ENCODE measurements at regions of chr7 and their contacts with region 1.

Region 1: DNA sequence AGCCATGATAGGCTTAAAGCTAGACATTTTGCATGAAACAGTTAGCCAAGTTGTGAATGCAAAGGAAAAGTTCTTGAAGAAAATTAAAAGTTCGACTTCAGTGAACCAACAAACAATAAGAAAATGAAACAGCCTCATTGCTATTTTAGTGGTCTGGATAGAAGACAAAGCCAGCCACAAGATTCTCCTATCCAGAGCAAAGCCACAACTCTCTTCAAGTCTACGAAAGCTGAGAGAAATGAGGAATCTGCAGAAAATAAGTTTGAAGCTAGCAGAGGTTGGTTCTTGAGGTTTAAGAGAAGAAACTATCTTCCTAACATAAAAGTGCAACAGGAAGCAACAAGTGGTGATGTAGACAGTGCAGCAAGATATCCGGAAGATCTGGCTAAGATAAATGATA is 271.4 kb upstream of the GRM3 start:
- DNase-seq: no peak
- ATAC-seq: no peak
- H3K4me3 ChIP-seq: no peak overlapping the region
- H3K27ac ChIP-seq: no peak overlapping the region
- H3K4me1 ChIP-seq: no peaks in the 10 kb centered on the region
- H3K27me3 ChIP-seq: no peaks in the 10 kb centered on the region
- CTCF ChIP-seq: no peak
- POLR2A ChIP-seq: no peak
- RAD21 ChIP-seq: no peak

Region 2: DNA sequence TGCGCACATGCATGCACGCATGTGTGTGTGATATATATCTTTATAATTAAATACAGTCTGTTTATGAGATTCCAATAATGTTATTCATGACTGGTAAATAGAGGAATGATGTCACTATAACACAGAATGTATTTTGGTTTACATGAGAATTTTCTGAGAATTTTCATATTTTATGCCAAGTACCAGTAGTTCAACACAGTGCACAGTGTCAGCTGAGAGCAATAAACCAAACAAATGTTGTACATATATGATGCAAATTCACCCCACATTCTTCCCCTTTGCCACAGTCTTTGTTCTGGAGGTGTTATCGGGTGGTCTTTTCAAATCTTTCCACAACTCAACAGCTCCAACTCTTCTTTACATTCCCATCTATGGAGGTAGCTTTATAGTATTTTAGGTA is 190.8 kb before region 1 on chr7:
- CTCF ChIA-PET with region 1: no interaction called
- POLR2A ChIA-PET with region 1: no interaction called
- RAD21 ChIA-PET with region 1: no interaction called
- intact Hi-C with region 1: no loop called
- DNase-seq: no peak
- ATAC-seq: no peak
- H3K4me3 ChIP-seq: no peak overlapping the region
- H3K27ac ChIP-seq: no peak overlapping the region
- H3K4me1 ChIP-seq: no peaks in the 10 kb centered on the region
- H3K27me3 ChIP-seq: no peaks in the 10 kb centered on the region
- CTCF ChIP-seq: no peak
- POLR2A ChIP-seq: no peak
- RAD21 ChIP-seq: no peak

Region 3: GRCh38 chr7:86209036-86209435 is 163.2 kb before region 1 on chr7:
- CTCF ChIA-PET with region 1: no interaction called
- POLR2A ChIA-PET with region 1: no interaction called
- RAD21 ChIA-PET with region 1: no interaction called
- intact Hi-C with region 1: no loop called
- DNase-seq: no peak
- ATAC-seq: no peak
- H3K4me3 ChIP-seq: no peak overlapping the region
- H3K27ac ChIP-seq: no peak overlapping the region
- H3K4me1 ChIP-seq: no peaks in the 10 kb centered on the region
- H3K27me3 ChIP-seq: no peaks in the 10 kb centered on the region
- CTCF ChIP-seq: no peak
- POLR2A ChIP-seq: no peak
- RAD21 ChIP-seq: no peak

Region 4: DNA sequence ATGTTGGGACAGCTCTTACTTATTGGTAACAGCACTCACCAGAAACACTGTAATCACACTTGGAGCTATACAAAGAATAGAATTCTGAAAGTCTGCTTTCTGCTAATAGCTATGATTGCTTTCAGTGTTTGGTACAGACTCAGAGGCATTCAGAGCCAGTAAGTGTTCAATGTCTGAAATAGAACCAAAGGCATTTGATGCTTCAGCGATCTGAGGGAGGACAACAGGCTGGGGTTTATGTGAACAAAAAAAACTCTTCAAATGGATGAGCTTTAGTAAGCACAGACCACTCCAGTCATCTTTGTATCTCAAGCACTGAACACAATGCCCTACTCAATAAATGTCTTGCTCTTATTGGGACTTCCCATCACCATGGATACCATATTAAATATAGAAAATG is 51.4 kb before region 1 on chr7:
- CTCF ChIA-PET with region 1: no interaction called
- POLR2A ChIA-PET with region 1: no interaction called
- RAD21 ChIA-PET with region 1: no interaction called
- intact Hi-C with region 1: loop called (anchors 10 kb)
- DNase-seq: no peak
- ATAC-seq: no peak
- H3K4me3 ChIP-seq: no peak overlapping the region
- H3K27ac ChIP-seq: no peak overlapping the region
- H3K4me1 ChIP-seq: no peaks in the 10 kb centered on the region
- H3K27me3 ChIP-seq: no peaks in the 10 kb centered on the region
- CTCF ChIP-seq: no peak
- POLR2A ChIP-seq: no peak
- RAD21 ChIP-seq: no peak

Region 5: DNA sequence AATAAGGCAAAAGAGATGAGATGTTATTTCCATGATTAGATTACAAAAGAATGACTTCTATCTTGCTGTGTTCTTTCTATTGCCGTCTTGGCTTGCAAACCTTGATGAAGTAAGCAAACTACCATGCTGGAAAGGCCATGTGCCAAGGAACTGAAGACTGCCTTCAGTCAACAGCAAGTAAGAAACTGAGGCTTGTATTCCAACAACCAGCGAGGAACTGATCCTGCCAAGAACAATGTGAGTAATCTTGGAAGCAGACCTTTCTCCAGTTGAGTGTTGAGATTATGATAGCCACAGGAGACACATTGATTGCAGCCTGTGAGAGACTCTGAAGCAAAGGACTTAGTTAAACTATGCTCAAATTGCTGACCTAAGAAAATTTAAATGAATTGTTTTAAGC is 106.9 kb after region 1 on chr7:
- CTCF ChIA-PET with region 1: no interaction called
- POLR2A ChIA-PET with region 1: no interaction called
- RAD21 ChIA-PET with region 1: no interaction called
- intact Hi-C with region 1: no loop called
- DNase-seq: no peak
- ATAC-seq: no peak
- H3K4me3 ChIP-seq: no peak overlapping the region
- H3K27ac ChIP-seq: no peak overlapping the region
- H3K4me1 ChIP-seq: no peaks in the 10 kb centered on the region
- H3K27me3 ChIP-seq: no peaks in the 10 kb centered on the region
- CTCF ChIP-seq: no peak
- POLR2A ChIP-seq: no peak
- RAD21 ChIP-seq: no peak

Region 6: DNA sequence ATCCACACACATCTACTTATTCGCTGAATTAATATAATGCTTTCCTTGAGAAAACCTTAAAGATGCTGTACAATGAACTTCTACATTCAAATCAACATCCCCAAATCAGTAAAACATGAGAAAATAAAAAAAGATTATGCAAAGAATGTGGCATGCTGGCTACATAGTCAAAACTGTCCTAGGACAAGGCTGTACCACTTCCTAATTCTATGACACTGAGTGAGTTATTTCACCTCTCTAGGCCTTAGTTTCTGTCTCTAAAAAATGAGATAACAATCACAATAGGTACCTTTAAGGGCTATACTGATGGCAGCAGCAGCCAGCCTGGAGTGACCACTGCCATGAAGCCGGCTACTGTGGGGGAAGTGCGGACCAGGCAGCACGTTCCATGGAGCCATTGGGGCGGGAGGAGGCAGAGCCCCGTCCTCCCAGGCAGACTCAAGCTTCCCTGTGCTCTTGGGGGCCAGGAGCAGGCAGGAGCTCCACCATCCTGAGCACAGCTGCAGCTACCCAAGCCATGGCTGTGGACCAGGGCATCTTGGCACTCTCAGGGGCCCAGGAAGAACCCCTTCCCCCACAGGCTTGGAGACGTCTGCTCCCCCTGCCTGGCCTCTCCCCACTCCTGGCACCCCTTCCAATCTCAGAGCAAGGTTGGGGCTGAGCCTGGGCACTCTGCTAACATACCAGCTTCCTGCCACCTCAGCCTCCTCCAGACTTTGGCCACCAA is 577.0 kb after region 1 on chr7:
- CTCF ChIA-PET with region 1: no interaction called
- POLR2A ChIA-PET with region 1: no interaction called
- RAD21 ChIA-PET with region 1: no interaction called
- intact Hi-C with region 1: no loop called
- DNase-seq: no peak
- ATAC-seq: no peak
- H3K4me3 ChIP-seq: no peak overlapping the region
- H3K27ac ChIP-seq: no peak overlapping the region
- H3K4me1 ChIP-seq: no peaks in the 10 kb centered on the region
- H3K27me3 ChIP-seq: no peaks in the 10 kb centered on the region
- CTCF ChIP-seq: no peak
- POLR2A ChIP-seq: no peak
- RAD21 ChIP-seq: no peak

Measured in HCT116 (cell line).